AG04450 (cell line): ENCODE measurements at regions of chr22 and their contacts with region 1.

Region 1: DNA sequence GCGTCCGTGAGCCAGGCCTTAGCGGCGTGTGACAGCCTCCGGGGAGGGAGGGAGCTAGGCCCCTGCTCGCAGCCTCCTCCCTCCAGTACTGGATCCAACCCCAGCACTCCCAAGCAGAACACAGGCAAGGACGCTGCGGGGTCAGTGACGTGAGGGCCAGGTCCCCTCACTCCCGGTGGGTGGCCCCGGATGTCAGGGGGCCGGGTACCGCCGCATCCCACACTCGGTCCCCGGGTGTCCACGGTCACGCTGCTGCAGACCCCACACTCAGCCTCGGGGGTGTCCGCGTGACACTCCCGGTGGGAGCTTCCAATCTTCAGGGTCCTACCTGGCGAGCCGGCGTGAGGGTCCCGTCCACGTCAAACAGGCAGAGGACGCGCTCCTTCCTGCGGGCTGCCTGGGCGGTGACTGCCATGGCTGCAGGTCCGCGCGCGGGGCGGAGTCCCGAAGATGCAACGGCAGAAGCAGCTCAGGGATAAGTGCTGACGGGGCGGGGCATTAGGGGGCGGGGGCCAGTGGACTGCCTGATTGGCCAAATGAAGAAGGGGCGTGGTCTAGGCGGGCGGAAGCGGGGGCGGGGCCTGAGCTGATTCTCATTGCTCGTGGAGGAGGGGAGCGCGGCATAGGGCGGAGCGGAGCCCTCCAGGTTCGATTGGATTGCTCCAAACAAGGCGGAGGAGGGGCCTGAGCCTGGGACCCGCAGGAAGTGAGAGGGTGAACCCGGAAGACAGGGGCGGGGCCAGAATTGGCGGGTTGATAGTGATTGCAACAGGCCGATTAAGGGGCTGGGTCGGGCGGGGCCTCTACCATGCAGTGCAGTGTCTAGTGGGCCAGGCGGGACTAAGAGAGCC is at the start of gene PMM1:
- DNase-seq: peak; percentile 99
- H3K4me3 ChIP-seq: peak within 1 kb of the TSS; percentile 95
- H3K27ac ChIP-seq: peak within 1 kb of the TSS; percentile 61
- H3K27me3 ChIP-seq: no peaks in the 10 kb centered on the region
- CTCF ChIP-seq: no peak
- polyA plus RNA-seq, gene PMM1: 60.7 and 72.5 TPM in 2 replicates

Region 2: DNA sequence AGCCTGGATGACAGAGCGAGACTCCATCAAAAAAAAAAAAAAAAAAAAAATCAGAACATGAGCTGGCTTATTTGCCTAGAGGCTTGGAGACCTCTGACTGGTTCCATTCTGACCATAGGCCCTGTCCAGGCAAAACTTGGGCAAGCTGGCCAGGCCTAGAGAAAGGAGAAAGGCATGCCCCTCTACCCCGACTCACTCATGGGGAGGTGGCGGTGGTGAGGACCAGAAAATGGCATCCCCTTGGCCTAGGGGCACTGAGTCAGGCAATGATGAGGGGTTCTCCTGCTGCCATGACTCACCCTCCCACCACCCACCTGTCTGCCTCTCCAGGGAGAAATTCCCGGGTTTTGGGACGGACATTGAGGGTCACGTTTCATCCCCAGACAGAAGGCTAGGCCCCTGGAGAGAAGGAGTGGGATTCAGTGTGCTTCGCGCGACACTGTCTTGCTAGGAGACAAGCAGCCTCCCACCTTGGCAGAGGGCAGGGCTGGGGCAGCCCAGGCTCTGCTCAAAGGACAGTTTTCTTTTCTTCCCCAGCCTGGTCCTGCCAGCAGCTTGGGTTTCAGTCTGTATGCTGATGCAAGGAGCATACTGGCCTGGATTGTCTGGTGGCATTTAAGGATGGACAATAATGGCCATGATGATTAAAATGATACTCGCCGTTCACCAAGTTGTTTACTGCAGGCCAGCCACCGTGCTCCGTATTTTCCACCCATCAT is 160.2 kb before region 1 on chr22:
- CTCF ChIA-PET with region 1: no interaction called
- POLR2A ChIA-PET with region 1: no interaction called
- DNase-seq: no peak
- H3K4me3 ChIP-seq: no peak overlapping the region
- H3K27ac ChIP-seq: peak overlapping the region; percentile 31
- H3K27me3 ChIP-seq: no peaks in the 10 kb centered on the region
- CTCF ChIP-seq: no peak

Region 3: DNA sequence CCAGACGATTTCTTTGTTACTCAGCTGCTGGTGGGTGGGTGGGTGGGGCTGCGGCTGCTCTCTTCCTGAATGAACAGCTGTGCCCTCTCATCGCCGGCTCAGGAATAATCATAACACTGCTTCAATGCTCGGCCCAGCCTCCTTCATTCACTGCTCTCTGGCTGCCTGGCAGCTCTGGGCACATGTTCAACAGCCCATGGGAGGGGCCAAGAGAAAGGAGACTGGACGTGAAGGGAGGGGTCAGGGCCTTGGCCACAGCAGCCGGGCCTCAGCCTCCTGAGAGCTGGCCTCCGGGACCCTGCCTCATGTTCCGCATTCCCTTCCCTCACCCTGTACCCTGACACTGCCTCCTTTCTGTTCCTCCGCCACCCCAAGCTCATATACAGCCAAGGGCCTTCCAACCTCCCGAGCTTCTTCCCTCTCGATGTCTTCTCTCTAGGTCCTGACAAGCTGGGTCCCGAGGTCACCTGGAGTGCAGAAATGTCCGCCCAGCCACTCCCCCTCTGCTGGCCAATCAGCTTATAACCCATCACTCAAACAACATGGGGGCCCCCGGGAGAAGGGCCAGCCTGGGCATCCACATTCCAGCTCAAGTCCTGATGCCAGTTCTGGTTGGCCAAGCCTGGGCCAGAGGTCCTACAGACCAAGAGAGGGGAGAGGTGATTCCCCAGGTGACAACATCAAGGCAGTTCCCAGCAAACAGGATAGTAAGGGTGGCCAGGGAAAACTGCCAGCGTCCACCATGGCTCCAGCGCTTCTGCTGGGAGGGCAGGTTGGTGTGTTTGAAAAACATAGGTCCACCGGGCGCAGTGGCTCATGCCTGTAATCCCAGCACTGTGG is 32.0 kb before region 1 on chr22:
- CTCF ChIA-PET with region 1: no interaction called
- POLR2A ChIA-PET with region 1: interaction called, 10 read pairs
- DNase-seq: peak; percentile 88
- H3K4me3 ChIP-seq: peak overlapping the region; percentile 17
- H3K27ac ChIP-seq: peak overlapping the region; percentile 93
- H3K27me3 ChIP-seq: no peaks in the 10 kb centered on the region
- CTCF ChIP-seq: no peak

Region 4: GRCh38 chr22:41565403-41566054 is 24.1 kb before region 1 on chr22:
- CTCF ChIA-PET with region 1: no interaction called
- POLR2A ChIA-PET with region 1: interaction called, 12 read pairs
- DNase-seq: peak; percentile 56
- H3K4me3 ChIP-seq: no peak overlapping the region
- H3K27ac ChIP-seq: peak overlapping the region; percentile 94
- H3K27me3 ChIP-seq: no peaks in the 10 kb centered on the region
- CTCF ChIP-seq: no peak

Region 5: DNA sequence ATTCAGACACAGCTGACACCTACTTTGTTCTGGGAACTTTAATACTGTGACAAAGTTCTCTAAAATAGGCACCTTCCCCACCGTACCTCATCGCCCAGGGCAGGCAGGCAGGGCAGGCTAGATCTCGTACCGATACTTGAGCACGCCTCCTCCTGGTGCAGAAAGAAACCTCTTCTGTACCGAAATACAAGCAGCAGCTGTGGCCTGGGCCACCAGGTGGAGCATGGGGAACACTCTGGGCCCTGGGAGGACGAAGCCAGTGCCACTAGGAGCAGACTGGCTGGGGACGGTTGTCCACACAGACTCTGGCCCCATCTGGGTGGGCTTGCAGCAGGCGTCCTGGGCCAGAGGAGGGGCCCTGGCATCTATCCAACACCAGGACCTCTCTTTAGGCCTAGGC is 12.7 kb before region 1 on chr22:
- CTCF ChIA-PET with region 1: no interaction called
- POLR2A ChIA-PET with region 1: interaction called, 15 read pairs
- DNase-seq: no peak
- H3K4me3 ChIP-seq: no peak overlapping the region
- H3K27ac ChIP-seq: no peak overlapping the region
- H3K27me3 ChIP-seq: no peaks in the 10 kb centered on the region
- CTCF ChIP-seq: peak; percentile 66